ENCODE measurements at regions of chr2 and their contacts with region 1.

Region 1: GRCh38 chr2:106638043-106638442 is 150.9 kb downstream of the CD8B2 start:
- DNase-seq: no peak
- H3K4me3 ChIP-seq: no peak overlapping the region
- H3K27ac ChIP-seq: no peak overlapping the region
- H3K4me1 ChIP-seq: peaks cover 11% of the 10 kb centered on the region
- H3K27me3 ChIP-seq: no peaks in the 10 kb centered on the region
- CTCF ChIP-seq: peak in 1 of 3 experiments; percentile 33
- POLR2A ChIP-seq: no peak

Region 2: DNA sequence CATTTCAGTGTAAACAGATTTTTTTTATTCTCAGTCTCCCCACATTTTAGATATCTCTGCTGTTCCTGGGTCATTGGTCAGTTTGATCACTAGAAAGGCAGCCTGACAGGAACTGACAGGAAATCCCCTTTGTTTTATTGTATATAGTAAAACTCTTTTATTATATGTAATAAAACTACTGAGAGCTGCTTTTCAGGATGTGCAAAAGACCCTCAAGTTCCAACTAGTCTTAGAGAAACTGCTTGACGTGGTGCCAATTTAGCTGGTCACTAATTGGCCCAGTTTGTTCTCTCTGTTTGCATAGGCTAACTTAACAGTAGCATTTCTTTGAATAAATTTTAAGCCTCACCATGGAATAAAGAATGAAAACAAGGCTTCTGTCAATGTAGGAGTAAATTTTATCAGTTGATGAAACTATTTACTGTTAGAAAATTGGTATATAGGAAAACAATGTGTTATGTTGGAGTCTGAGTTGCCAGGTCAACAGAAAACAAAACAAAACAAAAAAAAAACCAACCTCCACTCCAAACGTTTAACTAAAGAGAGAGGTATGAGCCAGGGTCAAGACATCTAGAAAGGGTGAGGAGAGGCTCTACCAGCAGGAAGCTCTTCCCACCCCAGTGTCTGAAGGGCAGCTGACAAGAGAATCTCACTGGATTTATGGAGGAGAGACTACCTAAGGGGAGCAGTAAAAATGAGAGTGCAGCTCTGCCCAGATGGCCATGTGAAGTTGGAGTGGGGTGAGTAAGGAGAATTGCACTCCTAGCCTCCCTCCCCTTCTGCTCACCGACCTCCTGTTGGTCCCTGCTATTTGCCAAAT is 63.4 kb after region 1 on chr2:
- intact Hi-C with region 1: loop called (anchors 2 kb)
- DNase-seq: no peak
- H3K4me3 ChIP-seq: no peak overlapping the region
- H3K27ac ChIP-seq: no peak overlapping the region
- H3K4me1 ChIP-seq: peaks cover 3% of the 10 kb centered on the region
- H3K27me3 ChIP-seq: no peaks in the 10 kb centered on the region
- CTCF ChIP-seq: no peak
- POLR2A ChIP-seq: no peak

Region 3: GRCh38 chr2:107182981-107183380 is 544.9 kb after region 1 on chr2:
- intact Hi-C with region 1: no loop called
- DNase-seq: no peak
- H3K4me3 ChIP-seq: no peak overlapping the region
- H3K27ac ChIP-seq: no peak overlapping the region
- H3K4me1 ChIP-seq: no peaks in the 10 kb centered on the region
- H3K27me3 ChIP-seq: no peaks in the 10 kb centered on the region
- CTCF ChIP-seq: no peak
- POLR2A ChIP-seq: no peak

Measured in vagina (tissue), 2 donors.